Sigmoid colon (tissue), 7 donors: ENCODE measurements at regions of chr5 and their contacts with region 1.

Region 1: GRCh38 chr5:67003935-67004729 is 192.5 kb downstream of the CD180 start:
- DNase-seq: peak; percentile 90
- H3K4me3 ChIP-seq: peak overlapping the region; percentile 40 to 69 (median 62)
- H3K27ac ChIP-seq: peak overlapping the region; percentile 83 to 90 (median 88)
- H3K4me1 ChIP-seq: peaks cover 0 to 34% (median 29%) of the 10 kb centered on the region in 4 donors
- H3K27me3 ChIP-seq: no peaks in the 10 kb centered on the region
- CTCF ChIP-seq: no peak
- EP300 ChIP-seq: no peak
- POLR2A ChIP-seq: peak; percentile 49 to 50

Region 2: DNA sequence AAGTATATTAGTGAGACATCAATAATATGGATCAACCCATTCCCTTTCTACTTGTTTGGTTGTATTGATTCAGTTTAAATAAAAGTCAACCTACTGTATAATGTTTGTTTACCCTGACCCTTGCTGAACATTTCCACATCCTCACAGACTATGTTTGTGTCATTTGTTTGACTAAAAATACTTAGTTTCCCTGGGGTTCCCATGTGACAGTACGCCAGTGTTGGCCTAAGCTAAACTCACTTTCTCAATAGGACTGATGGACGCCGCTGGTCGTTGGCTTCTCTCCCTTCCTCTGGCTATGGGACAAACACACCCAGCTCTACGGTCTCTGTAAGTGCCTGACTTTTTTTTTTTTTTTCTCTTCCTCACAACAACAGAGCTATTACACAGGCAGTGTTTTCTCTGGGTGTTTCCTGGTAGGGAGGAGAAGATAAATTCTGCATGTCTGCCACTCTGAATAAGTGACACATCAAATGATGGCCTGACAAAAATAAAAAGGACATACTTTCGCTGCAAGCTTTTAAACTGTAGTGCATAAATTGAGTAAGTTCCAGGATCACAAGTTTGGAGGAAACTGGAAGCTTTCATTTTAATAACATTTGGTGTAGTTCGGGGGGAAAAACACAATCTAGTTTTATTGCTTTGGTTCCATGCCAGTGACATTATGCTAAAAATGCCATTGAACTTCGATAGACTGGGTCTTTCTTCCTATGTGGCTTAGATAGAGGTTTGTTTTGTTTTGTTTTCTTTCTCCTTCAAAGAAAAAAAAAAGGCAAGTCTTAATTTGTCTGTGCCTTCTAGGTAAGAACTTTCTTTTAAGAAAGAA is 91.4 kb after region 1 on chr5:
- intact Hi-C with region 1: loop called (anchors 2 kb)
- DNase-seq: peak; percentile 90
- H3K4me3 ChIP-seq: peak overlapping the region in 2 of 4 donors; percentile 11 to 23
- H3K27ac ChIP-seq: peak overlapping the region; percentile 51 to 67 (median 61)
- H3K4me1 ChIP-seq: peaks cover 0 to 61% (median 30%) of the 10 kb centered on the region in 4 donors
- H3K27me3 ChIP-seq: no peaks in the 10 kb centered on the region
- CTCF ChIP-seq: no peak
- EP300 ChIP-seq: no peak
- POLR2A ChIP-seq: no peak

Region 3: DNA sequence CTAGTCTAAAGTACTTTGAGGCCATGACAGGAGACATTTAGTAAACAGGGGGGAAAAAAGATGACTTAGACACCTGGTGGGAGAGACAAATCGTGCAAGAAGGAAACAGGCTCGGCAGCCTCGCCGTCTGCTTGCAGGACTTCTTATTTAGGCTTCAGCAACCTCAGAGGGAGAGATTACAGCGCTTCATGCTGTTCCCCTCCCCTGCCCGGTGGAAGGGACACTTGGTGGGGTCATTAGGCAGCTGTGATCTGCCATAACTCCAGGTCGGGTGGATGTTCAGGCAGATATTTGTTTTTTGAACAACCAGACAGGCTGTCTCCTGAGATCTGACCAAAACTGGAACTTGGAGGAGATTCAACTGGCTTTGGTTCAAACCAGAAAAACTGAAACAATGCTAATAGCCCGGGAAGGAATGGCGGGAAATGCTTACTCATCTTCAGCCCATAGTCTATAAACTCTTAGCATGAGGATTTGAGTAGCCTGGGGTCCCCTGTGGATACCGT is 230.6 kb after region 1 on chr5:
- intact Hi-C with region 1: loop called (anchors 10 kb)
- DNase-seq: no peak
- H3K4me3 ChIP-seq: peak overlapping the region in 2 of 4 donors; percentile 21
- H3K27ac ChIP-seq: peak overlapping the region; percentile 42 to 85 (median 76)
- H3K4me1 ChIP-seq: peaks cover 0 to 51% (median 50%) of the 10 kb centered on the region in 4 donors
- H3K27me3 ChIP-seq: no peaks in the 10 kb centered on the region
- CTCF ChIP-seq: no peak
- EP300 ChIP-seq: peak in 1 of 4 donors; percentile 37
- POLR2A ChIP-seq: no peak